Right cardiac atrium (tissue), 5 donors: ENCODE measurements at regions of chr4 and their contacts with region 1.

Region 1: DNA sequence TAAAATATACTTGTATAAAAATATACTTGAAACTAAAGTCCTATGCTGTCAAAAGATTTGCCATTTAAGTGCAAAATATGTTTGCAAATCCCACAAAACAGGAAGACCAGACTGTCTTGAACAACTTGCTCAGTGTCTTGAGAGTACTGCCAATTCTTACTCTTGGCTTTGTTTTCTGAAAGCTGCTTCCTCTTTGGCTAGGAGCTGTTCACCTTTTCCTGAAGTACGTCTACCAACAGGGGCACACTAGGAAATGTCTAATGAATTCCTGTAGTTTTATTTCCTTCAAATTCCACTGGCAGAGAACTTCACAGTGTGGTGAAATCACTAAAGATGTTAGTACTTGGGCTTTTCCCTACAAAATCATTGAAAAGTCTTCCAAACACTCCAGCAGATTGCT is 46.4 kb upstream of the ABCG2 start:
- DNase-seq: no peak
- ATAC-seq: peak; percentile 32 to 36
- H3K4me3 ChIP-seq: no peak overlapping the region
- H3K27ac ChIP-seq: no peak overlapping the region
- H3K4me1 ChIP-seq: no peaks in the 10 kb centered on the region
- H3K27me3 ChIP-seq: no peaks in the 10 kb centered on the region

Region 2: DNA sequence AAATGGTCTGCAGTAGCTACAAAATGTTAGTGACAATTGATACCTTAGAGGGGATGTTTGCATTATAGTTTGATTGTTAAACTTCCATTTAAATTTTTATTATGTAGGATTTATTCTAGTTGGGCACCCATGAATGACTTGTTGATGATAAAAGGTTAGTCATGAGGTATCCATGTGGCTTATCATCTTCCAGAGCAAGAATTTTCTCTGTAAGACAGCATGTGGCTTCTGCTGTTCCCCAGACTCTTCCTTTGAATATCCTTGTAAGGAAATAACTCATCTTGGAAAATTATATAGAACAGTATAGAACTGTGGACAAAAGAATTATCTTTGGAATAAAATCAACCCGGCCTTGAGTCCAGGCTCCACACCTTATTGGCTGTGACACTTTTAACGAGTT is 944.4 kb before region 1 on chr4:
- intact Hi-C with region 1: loop called in 1 of 4 experiments (anchors 10 kb)
- DNase-seq: no peak
- ATAC-seq: no peak
- H3K4me3 ChIP-seq: no peak overlapping the region
- H3K27ac ChIP-seq: no peak overlapping the region
- H3K4me1 ChIP-seq: no peaks in the 10 kb centered on the region
- H3K27me3 ChIP-seq: no peaks in the 10 kb centered on the region

Region 3: GRCh38 chr4:87856816-87857215 is 348.1 kb before region 1 on chr4:
- intact Hi-C with region 1: loop called (anchors 5 to 10 kb)
- DNase-seq: no peak
- ATAC-seq: no peak
- H3K4me3 ChIP-seq: no peak overlapping the region
- H3K27ac ChIP-seq: no peak overlapping the region
- H3K4me1 ChIP-seq: no peaks in the 10 kb centered on the region
- H3K27me3 ChIP-seq: no peaks in the 10 kb centered on the region

Region 4: DNA sequence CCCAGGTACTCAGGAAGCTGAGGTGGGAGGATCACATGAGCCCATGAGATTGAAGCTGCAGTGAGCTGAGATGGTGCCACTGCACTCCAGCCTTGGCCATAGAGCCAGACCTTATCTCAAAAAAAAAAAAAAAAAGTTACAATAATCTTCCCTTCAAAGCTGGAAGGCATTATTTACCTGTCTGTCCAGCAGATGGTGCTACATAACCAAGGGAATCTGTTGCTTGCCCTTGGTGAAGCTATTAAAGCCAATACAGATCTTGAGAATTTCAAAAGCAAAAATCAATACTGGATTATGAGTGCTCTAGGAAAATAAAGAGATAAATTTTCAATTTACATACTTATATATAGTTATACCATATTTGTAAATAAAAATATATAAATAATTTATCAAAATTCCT is 171.6 kb before region 1 on chr4:
- intact Hi-C with region 1: loop called (anchors 5 to 10 kb)
- DNase-seq: no peak
- ATAC-seq: peak; percentile 50 to 51
- H3K4me3 ChIP-seq: no peak overlapping the region
- H3K27ac ChIP-seq: no peak overlapping the region
- H3K4me1 ChIP-seq: no peaks in the 10 kb centered on the region
- H3K27me3 ChIP-seq: no peaks in the 10 kb centered on the region